GM13976 (cell line): ENCODE measurements at regions of chr18 and their contacts with region 1.

Region 1: GRCh38 chr18:35756506-35757117 is 175.1 kb downstream of the GALNT1 start:
- DNase-seq: peak; percentile 71
- CTCF ChIP-seq: peak; percentile 73

Region 2: DNA sequence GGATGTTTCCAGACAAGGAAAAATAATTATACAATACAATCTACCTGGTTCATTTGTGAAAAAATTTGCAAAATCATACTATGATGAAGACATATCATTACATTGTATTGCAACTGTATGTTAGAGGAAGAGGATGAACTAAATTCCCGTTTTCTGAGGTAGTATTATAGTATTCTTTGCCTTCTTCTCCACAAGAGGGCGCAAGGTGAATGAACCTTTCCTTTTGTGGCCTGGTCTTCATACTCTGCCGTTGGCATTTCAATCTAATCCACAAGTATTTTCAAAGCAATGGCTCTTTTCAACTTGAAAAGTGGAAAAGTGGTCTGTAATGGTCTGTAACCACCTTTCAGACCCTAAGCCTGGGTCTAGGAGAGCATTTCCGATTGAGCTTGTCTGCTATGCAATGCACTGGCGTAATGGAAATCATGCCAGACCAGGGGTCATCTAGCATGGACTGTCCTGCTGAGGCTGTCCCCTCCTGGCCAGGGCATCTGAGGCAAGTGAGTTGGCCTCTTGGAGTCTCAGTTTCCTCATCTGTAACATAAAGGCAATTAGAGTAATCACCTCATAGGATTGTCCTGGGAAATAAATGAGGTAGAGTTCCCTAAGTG is 348.6 kb before region 1 on chr18:
- in situ Hi-C with region 1: loop called (anchors 25 kb)
- DNase-seq: peak; percentile 68
- CTCF ChIP-seq: peak; percentile 68

Region 3: DNA sequence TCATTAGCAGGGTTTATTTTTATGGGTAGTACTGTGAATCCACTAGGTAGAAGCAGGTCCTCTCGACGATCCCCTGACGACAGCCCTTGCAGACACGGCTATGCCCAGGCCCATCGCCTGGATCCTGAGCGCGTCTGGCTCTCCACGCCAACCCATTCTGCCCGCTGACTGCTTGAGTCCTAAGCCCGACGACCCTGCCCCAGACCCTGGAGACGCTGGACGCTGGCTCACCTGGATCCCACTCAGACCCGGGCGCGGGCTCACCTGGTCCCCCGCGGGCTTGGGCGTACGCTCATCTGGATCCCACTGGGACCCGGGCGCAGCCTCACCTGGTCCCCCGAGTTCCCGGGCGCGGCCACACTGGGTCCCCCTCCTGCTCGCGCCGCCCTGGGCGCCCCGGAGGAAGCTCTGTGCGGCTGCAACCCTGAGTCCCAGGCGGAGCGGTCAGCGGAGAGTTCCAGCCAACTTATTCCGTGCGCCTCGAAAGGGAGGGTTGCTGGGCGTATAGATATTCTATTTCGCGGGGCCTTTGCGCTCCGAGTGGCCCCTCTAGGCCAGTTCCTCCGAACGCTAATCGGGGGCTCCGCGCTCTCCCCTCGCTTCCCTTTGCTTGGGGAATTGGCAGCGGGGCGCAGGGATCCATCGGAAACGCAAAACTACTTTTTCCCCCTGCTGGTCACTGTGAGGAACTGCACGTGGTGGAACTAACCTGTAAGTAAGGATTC is 193.5 kb after region 1 on chr18:
- in situ Hi-C with region 1: loop called (anchors 10 kb)
- DNase-seq: peak; percentile 75
- CTCF ChIP-seq: peak; percentile 84

Region 4: DNA sequence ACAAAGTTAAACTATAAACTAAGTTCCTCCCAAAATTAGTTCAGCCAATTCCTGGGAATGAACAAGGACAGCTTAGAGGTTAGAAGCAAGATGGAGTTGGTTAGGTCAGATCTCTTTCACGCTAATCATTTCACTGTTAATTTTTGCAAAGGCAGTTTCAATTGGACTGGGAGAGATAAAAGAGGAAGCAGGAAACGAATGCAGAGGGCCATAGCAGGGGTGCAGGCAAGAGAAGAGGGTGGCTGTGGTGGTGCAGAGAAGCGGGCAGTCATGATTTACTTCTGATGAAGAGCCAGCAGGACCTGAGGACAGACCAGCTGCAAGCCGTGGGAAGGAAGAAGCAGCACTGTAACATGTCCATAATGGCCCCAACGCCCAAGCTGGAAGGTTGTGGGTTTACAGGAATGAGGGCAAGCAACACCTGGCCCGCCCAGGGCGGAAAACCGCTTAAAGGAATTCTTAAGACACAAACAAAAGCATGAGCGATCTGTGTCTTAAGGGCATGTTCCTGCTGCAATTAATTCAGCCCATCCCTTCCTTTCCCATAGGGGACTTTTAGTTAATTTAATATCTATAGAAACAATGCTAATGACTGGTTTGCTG is 211.8 kb after region 1 on chr18:
- in situ Hi-C with region 1: no loop called
- DNase-seq: no peak
- CTCF ChIP-seq: no peak